ENCODE measurements at regions of chr3 and their contacts with region 1.

Region 1: DNA sequence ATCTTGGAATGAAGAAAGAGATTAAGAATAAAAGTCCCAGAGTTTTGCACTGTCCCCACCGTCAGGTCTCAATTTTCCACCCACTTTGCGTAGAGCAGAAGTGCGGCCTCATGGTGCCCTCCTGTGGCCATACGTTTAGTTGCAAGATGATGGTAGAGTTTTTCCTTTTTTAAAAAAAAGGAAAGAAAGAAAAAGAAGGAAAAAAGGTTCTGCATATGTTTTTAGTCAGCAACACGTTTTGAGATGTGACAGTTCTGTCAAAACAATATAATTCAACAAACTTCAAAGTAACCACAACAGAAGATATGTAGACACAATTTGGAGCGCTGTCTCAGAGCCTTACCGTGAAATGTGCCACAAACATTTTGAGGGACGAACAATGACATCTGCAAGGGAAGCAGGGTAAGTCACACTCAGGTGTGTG is 24.6 kb downstream of the EBLN2 start:
- DNase-seq: peak; percentile 46
- CTCF ChIP-seq: peak; percentile 84

Region 2: GRCh38 chr3:72847751-72848702 is 238.1 kb before region 1 on chr3 and contains the start of gene SHQ1:
- CTCF ChIA-PET with region 1: interaction called, 30 read pairs
- POLR2A ChIA-PET with region 1: no interaction called
- DNase-seq: peak; percentile 92
- CTCF ChIP-seq: no peak

Region 3: DNA sequence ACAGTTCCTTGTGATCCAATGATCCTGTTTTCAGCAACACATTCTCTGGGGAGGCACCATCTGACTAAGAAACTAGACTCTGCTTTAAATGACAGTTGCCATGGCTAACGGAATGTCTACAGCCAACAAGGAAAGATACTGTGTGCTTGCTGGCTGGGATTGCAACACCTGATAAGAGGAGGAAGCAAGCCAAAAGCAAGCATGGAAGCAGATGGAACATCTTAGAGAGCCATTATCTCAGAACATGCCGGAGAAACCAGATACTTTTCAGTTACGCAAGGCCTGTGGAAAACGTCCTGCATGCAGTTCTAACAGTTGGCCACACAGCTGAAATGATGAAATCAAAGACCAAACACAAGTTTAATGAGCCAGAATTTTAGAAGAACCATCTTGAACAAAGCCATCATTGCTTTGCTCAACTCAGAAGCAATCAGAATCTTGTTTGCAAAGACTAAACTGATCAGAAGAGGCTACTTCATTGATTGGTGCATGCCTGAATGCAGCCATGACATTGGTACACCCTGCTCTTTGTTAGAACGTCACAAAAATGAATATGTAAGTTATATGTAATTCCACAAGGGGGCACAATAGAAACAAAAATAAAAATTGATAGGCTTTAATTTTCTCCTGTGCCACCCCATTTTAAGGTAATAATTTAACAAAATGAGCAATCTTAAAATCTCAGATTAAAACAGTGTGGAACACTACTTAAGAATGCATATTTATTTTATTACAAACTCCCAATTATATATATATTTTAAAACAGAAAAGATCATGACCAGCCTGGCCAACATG is 147.4 kb before region 1 on chr3:
- CTCF ChIA-PET with region 1: interaction called, 22 read pairs
- POLR2A ChIA-PET with region 1: no interaction called
- DNase-seq: peak; percentile 69
- CTCF ChIP-seq: peak; percentile 22

Region 4: GRCh38 chr3:72944696-72945095 is 141.4 kb before region 1 on chr3:
- CTCF ChIA-PET with region 1: interaction called, 22 read pairs
- POLR2A ChIA-PET with region 1: no interaction called
- DNase-seq: no peak
- CTCF ChIP-seq: no peak

Region 5: DNA sequence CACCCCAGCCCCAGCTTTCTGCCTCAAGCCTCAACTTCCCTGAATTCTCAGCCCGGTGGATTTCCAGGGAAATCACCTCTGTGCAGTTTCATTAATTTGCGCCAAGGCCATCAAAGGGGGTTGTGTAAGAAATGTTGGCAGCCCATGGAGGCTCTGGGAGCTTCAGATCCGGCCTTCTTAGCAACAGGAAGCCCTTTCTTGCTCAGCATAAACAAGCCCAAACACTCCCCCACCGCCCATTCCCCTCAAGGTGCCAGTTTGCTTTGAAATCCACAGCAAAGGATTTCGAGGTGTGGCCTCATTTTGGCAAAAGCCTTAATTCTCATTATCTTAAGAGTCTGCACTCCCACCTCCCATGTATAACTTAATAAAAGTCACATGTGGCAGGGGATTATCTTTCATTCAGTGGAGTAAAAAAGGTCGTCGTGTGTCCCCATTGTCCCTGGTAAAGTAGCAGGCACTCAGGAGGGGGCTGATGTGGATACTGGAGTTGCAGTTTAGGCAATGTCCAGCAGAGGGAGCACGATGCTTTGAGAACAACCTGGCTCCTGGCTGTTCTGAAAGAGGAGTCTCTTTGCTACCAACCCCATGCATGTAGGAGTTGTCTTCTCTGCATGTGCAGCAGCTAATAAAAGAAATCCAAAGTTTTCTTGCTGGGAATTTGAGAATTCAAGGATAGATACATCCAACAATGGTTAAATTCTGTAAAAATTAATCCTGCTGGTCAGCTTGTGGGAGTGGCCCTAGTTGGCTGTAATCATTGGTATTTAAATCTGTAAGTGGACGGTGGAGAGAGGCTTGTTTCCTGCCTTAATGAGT is 14.9 kb after region 1 on chr3:
- CTCF ChIA-PET with region 1: interaction called, 29 read pairs
- POLR2A ChIA-PET with region 1: no interaction called
- DNase-seq: peak; percentile 88
- CTCF ChIP-seq: peak; percentile 90

Region 6: GRCh38 chr3:73143821-73144237 is 57.7 kb after region 1 on chr3:
- CTCF ChIA-PET with region 1: no interaction called
- POLR2A ChIA-PET with region 1: no interaction called
- DNase-seq: no peak
- CTCF ChIP-seq: no peak